ENCODE measurements at regions of chr1 and their contacts with region 1.

Region 1: DNA sequence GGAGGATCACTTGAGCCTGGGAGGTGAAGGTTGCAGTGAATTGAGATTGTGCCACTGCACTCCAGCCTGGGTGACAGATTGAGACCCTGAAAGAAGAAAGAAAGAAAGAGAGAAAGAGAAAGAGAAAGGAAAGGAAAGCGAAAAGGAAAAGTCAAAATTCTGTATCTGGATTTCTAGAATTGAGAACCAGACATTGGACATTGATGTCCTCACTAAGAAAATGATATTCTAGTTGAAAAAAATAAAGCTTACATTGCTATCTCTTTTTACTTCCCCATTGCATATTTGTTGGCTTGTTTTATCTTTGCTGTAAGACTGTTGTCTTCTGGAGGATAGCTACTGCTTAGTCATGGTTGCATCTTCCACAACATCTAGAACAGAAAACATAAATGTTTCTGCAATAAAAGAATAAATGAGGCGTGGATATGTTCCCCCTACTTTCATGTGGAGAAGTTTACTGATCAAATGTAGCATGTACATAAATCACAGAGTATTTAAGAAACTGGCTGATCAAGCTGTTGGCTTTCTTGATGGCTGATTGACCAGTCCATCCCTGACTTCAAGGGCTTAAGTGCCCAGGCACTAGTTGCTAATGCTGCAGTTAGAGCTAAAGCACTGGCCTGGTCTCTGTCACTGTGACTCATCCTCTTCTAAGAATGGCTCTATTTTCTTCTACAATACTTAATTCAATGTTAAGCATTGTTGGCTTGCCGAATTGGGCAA is 17.7 kb downstream of the CD53 start:
- DNase-seq: no peak
- H3K4me3 ChIP-seq: no peak overlapping the region
- H3K27ac ChIP-seq: no peak overlapping the region
- H3K4me1 ChIP-seq: no peaks in the 10 kb centered on the region
- H3K27me3 ChIP-seq: peaks cover 7% of the 10 kb centered on the region
- CTCF ChIP-seq: no peak

Region 2: GRCh38 chr1:110850636-110851035 is 40.0 kb before region 1 on chr1:
- CTCF ChIA-PET with region 1: no interaction called
- POLR2A ChIA-PET with region 1: interaction called, 10 read pairs
- intact Hi-C with region 1: no loop called
- DNase-seq: no peak
- H3K4me3 ChIP-seq: no peak overlapping the region
- H3K27ac ChIP-seq: no peak overlapping the region
- H3K4me1 ChIP-seq: no peaks in the 10 kb centered on the region
- H3K27me3 ChIP-seq: peaks cover 80% of the 10 kb centered on the region
- CTCF ChIP-seq: no peak

Measured in A673 (cell line).